HCT116 (cell line): ENCODE measurements at regions of chr1 and their contacts with region 1.

Region 1: DNA sequence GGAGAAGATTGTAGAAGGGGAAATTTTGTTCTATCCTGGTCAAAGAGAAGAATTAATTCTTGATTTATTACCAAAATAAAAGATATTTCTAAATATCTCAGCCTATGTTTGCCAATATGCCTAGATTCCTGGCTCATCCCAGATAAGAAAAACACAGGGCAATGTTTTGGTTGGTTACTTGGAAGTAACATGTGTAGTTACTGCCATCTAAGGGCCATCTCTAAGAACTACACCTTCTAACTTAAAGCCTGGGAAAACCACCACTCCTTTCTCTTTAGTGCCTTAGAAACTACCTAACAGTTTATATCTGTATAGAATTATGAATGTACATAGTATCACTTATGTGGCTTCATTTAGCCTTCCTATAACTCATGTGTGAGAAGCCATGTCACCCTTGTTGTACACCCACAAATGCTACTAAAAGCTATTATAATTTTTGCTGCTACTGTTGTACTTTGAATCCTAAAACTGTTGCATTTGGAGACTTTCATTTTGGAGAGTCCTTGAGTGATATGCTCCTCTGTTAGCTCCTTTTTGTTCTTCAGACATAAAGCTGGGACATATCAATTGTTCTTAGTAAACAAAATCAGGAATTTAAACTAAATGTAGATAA is 4.5 kb downstream of the AIM2 start:
- DNase-seq: peak; percentile 48
- ATAC-seq: peak; percentile 83
- H3K4me3 ChIP-seq: no peak overlapping the region
- H3K27ac ChIP-seq: no peak overlapping the region
- H3K4me1 ChIP-seq: no peaks in the 10 kb centered on the region
- H3K27me3 ChIP-seq: no peaks in the 10 kb centered on the region; the same call in 1 of the 2 replicates
- CTCF ChIP-seq: peak; percentile 46 to 67 (median 50); a peak in 5 of 6 replicates
- POLR2A ChIP-seq: no peak
- RAD21 ChIP-seq: peak; percentile 66

Region 2: GRCh38 chr1:157963713-157964112 is 1108.4 kb before region 1 on chr1:
- CTCF ChIA-PET with region 1: no interaction called
- POLR2A ChIA-PET with region 1: no interaction called
- RAD21 ChIA-PET with region 1: no interaction called
- intact Hi-C with region 1: loop called (anchors 10 kb)
- DNase-seq: peak; percentile 39
- ATAC-seq: peak; percentile 88
- H3K4me3 ChIP-seq: no peak overlapping the region
- H3K27ac ChIP-seq: no peak overlapping the region
- H3K4me1 ChIP-seq: peaks cover 0 to 10% of the 10 kb centered on the region in 2 experiments; a peak in 2 of 4 replicates
- H3K27me3 ChIP-seq: peaks cover 25% of the 10 kb centered on the region
- CTCF ChIP-seq: peak; percentile 71 to 96 (median 80)
- POLR2A ChIP-seq: no peak
- RAD21 ChIP-seq: peak; percentile 95

Region 3: GRCh38 chr1:158334526-158335212 is 737.4 kb before region 1 on chr1:
- CTCF ChIA-PET with region 1: no interaction called
- POLR2A ChIA-PET with region 1: no interaction called
- RAD21 ChIA-PET with region 1: no interaction called
- intact Hi-C with region 1: no loop called
- DNase-seq: no peak
- ATAC-seq: no peak
- H3K4me3 ChIP-seq: no peak overlapping the region
- H3K27ac ChIP-seq: no peak overlapping the region
- H3K4me1 ChIP-seq: no peaks in the 10 kb centered on the region
- H3K27me3 ChIP-seq: peaks cover 16% of the 10 kb centered on the region; the same call in 1 of the 2 replicates
- CTCF ChIP-seq: no peak
- POLR2A ChIP-seq: no peak
- RAD21 ChIP-seq: no peak

Region 4: GRCh38 chr1:158506369-158506987 is 565.6 kb before region 1 on chr1:
- CTCF ChIA-PET with region 1: interaction called, 3 read pairs
- POLR2A ChIA-PET with region 1: no interaction called
- RAD21 ChIA-PET with region 1: no interaction called
- intact Hi-C with region 1: loop called (anchors 10 kb)
- DNase-seq: no peak
- ATAC-seq: peak; percentile 49; the same call in 1 of the 2 replicates
- H3K4me3 ChIP-seq: no peak overlapping the region
- H3K27ac ChIP-seq: no peak overlapping the region
- H3K4me1 ChIP-seq: no peaks in the 10 kb centered on the region
- H3K27me3 ChIP-seq: no peaks in the 10 kb centered on the region
- CTCF ChIP-seq: peak in 2 of 3 experiments; percentile 48 to 59; a peak in 4 of 6 replicates
- POLR2A ChIP-seq: no peak
- RAD21 ChIP-seq: peak; percentile 46